GM12878 (cell line): ENCODE measurements at regions of chr20 and their contacts with region 1.

Region 1: DNA sequence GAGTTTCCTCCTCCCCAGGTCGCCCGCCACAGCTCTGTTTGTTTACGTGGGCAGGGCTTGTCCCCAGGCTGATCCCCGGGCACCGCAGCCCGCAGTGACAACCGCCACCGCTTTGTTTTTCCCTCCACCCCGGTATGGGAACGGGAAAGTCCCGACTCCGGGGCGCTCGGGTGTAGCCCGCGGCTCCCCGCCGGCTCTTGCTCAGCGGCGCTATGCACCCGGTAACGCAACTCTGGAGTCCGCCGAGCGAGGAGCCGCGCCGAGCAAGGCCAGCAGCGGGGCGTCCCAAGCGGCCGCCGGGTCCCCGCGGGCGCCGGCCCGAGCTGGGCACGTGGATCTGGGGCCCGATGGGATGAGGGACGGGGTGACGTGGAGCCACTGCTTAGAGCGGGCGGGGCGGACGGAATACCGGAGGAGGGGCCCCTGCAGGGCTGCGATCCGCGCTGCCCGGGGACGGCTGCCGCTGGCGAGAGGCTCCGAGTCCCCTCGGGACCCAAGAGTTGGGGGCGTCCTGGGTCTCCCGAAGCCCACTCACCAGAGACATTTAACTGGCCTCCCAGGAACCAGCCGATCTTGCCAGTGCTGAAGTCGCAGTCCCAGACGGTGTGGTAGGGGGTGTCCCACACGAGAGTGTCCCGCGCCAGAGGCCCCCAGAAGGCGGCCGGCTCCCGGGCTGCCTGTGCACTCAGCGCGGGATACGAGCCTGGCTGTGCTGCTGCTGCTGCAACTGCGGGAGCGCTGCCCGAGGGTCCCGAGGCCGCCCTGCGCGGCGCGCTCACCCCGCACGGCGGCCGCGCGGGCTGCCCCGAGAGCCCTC is 497 bp downstream of the ACSS1 start:
- DNase-seq: no peak
- ATAC-seq: peak; percentile 63
- H3K4me3 ChIP-seq: peak overlapping the region; percentile 83
- H3K27ac ChIP-seq: peak overlapping the region; percentile 86
- H3K4me1 ChIP-seq: peaks cover 44% of the 10 kb centered on the region
- H3K27me3 ChIP-seq: peaks cover 0 to 4% of the 10 kb centered on the region in 2 experiments; a peak in 1 of 4 replicates
- CTCF ChIP-seq: no peak
- EP300 ChIP-seq: peak in 1 of 2 experiments; percentile 20; a peak in 1 of 4 replicates
- POLR2A ChIP-seq: peak; percentile 74
- RAD21 ChIP-seq: no peak

Region 2: DNA sequence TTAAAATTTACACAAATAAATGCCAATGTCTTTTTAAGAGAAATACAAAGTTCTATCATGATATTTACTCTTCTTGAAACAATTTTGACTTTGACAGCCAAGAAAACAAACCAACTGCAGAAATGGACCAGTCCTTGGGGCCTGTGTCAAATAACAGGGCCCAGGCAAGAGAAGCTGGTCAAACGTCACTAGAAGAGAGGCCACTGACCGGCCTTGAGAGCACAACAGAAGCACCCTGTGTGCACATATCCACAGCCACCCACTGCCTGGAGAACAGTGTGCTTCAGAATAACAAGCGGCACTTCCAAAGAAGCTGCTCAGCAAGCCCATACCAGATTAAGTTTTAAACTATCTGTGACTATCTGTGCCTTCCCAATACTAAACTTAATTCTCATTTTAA is 79.6 kb before region 1 on chr20:
- CTCF ChIA-PET with region 1: no interaction called
- POLR2A ChIA-PET with region 1: no interaction called
- RAD21 ChIA-PET with region 1: no interaction called
- SMC1A ChIA-PET with region 1: no interaction called
- in situ Hi-C with region 1: no loop called
- intact Hi-C with region 1: no loop called
- DNase-seq: no peak
- ATAC-seq: no peak
- H3K4me3 ChIP-seq: no peak overlapping the region
- H3K27ac ChIP-seq: no peak overlapping the region
- H3K4me1 ChIP-seq: no peaks in the 10 kb centered on the region
- H3K27me3 ChIP-seq: no peaks in the 10 kb centered on the region
- CTCF ChIP-seq: no peak
- EP300 ChIP-seq: no peak
- POLR2A ChIP-seq: no peak
- RAD21 ChIP-seq: no peak

Region 3: GRCh38 chr20:25160467-25160866 is 103.0 kb after region 1 on chr20:
- CTCF ChIA-PET with region 1: no interaction called
- POLR2A ChIA-PET with region 1: no interaction called
- RAD21 ChIA-PET with region 1: no interaction called
- SMC1A ChIA-PET with region 1: no interaction called
- in situ Hi-C with region 1: no loop called
- intact Hi-C with region 1: no loop called
- DNase-seq: no peak
- ATAC-seq: peak; percentile 95
- H3K4me3 ChIP-seq: no peak overlapping the region
- H3K27ac ChIP-seq: no peak overlapping the region
- H3K4me1 ChIP-seq: peaks cover 10% of the 10 kb centered on the region
- H3K27me3 ChIP-seq: no peaks in the 10 kb centered on the region
- CTCF ChIP-seq: no peak
- EP300 ChIP-seq: no peak
- POLR2A ChIP-seq: no peak
- RAD21 ChIP-seq: no peak

Region 4: GRCh38 chr20:25318471-25319240 is 261.2 kb after region 1 on chr20:
- CTCF ChIA-PET with region 1: no interaction called
- POLR2A ChIA-PET with region 1: no interaction called
- RAD21 ChIA-PET with region 1: no interaction called
- SMC1A ChIA-PET with region 1: no interaction called
- in situ Hi-C with region 1: no loop called
- intact Hi-C with region 1: no loop called
- DNase-seq: peak; percentile 88
- ATAC-seq: peak; percentile 94
- H3K4me3 ChIP-seq: no peak overlapping the region
- H3K27ac ChIP-seq: peak overlapping the region; percentile 93
- H3K4me1 ChIP-seq: peaks cover 40% of the 10 kb centered on the region
- H3K27me3 ChIP-seq: no peaks in the 10 kb centered on the region
- CTCF ChIP-seq: no peak
- EP300 ChIP-seq: peak; percentile 77 to 89; a peak in 3 of 4 replicates
- POLR2A ChIP-seq: peak; percentile 77
- RAD21 ChIP-seq: no peak

Region 5: DNA sequence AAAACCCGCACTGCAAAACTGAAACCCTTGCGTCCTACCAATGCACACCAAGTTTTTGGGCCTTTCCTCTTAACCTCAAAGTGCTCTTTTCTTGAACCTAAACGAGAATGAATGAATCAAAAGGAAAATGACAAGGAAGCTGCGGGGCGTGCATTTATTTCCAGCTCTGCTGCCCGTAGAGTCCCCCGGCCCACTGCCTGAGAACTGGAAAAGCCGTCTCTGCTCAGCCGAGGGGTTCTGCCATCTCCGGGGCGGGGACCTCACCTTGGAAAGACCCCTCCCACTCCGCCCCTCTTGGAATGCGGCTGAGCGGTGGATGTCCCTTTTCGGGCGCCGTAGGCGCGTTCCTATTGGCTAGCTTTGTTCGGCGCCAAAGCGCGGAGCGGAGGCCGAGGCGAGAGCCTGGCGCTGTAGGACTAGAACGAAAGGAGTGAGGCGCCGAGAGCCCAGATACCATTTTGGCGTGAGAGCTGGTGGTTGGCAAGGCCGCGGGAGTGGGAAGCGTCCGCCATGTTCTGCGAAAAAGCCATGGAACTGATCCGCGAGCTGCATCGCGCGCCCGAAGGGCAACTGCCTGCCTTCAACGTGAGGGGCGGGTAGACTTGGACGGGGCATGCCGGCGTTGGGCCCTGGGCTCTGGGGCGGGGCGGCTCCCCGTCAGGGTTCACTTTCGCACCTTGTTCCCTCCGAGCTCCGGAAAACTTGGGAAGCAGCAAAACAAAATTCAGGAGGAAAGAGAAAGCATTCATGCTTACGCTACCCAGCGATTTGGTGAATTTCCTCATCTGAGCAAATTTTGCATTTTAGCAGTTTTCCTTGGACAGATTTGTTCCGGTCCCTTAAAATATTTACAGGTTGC is 350.1 kb after region 1 on chr20 and contains the start of gene GINS1:
- CTCF ChIA-PET with region 1: no interaction called
- POLR2A ChIA-PET with region 1: no interaction called
- RAD21 ChIA-PET with region 1: no interaction called
- SMC1A ChIA-PET with region 1: interaction called, 3 read pairs
- in situ Hi-C with region 1: loop called (anchors 10 kb)
- intact Hi-C with region 1: no loop called
- DNase-seq: peak; percentile 65
- ATAC-seq: peak; percentile 94
- H3K4me3 ChIP-seq: peak within 1 kb of the TSS; percentile 87
- H3K27ac ChIP-seq: peak within 1 kb of the TSS; percentile 93
- H3K4me1 ChIP-seq: peaks cover 9% of the 10 kb centered on the region
- H3K27me3 ChIP-seq: no peaks in the 10 kb centered on the region
- CTCF ChIP-seq: no peak
- EP300 ChIP-seq: no peak
- POLR2A ChIP-seq: peak; percentile 94
- RAD21 ChIP-seq: no peak
- polyA plus RNA-seq, gene GINS1: 13.0 to 20.0 TPM